CD4-positive, alpha-beta memory T cell (primary cell): ENCODE measurements at regions of chr3 and their contacts with region 1.

Region 1: GRCh38 chr3:128879125-128879969 is at the start of gene ACAD9:
- DNase-seq: peak; percentile 97
- H3K4me3 ChIP-seq: peak within 1 kb of the TSS; percentile 82 to 91
- H3K4me3 Mint-ChIP-seq: peak within 1 kb of the TSS; percentile 85 to 97 (median 94)
- H3K27ac ChIP-seq: peak within 1 kb of the TSS; percentile 92
- H3K27ac Mint-ChIP-seq: peak within 1 kb of the TSS; percentile 92 to 99 (median 99)
- H3K4me1 ChIP-seq: peaks cover 38% of the 10 kb centered on the region
- H3K4me1 Mint-ChIP-seq: peaks cover 47 to 79% (median 61%) of the 10 kb centered on the region in 4 donors
- H3K27me3 ChIP-seq: no peaks in the 10 kb centered on the region
- H3K27me3 Mint-ChIP-seq: no peaks in the 10 kb centered on the region
- total RNA-seq, gene ACAD9: 54.9 to 62.2 TPM

Region 2: DNA sequence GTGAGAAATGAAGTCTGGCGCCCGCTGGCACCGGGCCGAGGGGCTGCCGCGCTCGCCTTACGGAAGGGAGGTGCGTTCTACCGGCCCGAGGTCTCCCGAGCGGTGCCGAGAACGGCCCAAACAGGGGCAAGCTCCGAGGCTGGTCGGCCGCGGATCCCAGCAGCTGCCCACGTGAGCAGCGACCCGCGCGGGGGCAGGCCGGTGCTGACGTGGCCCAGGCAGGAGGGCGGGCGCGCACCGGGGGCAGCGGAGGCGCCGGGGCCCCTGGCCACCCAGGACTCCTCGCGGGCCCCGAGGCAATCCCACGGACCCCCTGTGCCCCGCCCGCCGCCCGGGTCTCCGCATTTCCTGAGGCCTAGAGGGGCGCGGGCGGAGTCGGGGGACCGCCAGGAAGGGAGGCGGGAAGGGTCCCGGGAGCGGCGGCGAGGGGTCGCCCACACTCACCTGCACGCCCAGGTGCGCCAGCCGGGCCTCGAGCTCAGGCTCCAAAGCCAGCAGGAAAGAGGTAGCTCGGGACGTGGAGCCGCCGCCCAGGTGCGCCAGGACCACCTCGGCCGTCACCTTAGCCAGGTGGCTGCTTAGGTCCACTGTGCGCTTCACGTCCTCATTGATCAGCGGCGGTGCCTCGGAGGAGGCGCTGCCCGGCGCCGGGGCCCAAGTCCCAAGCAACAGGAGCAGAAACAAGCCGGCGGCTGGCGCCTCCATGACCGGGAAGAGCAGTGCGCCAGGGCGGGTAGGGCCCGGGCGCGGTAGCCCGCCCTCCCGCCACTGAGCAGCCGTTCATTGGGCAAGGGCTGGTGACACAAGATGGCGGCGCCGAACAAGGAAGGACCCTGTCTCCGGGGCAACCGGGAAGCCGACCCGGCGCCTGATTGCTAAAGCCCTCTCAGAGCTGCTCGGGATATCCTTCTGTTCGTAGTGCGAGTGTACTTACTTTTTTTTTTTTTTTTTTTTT is 229.0 kb before region 1 on chr3 and contains the start of gene RPN1:
- CTCF ChIA-PET with region 1: interaction called, 4 read pairs
- POLR2A ChIA-PET with region 1: interaction called, 20 read pairs
- intact Hi-C with region 1: loop called (anchors 1 kb)
- DNase-seq: peak; percentile 96 to 99 (median 97)
- H3K4me3 ChIP-seq: peak within 1 kb of the TSS; percentile 84 to 89
- H3K4me3 Mint-ChIP-seq: peak within 1 kb of the TSS; percentile 85 to 94 (median 88)
- H3K27ac ChIP-seq: peak within 1 kb of the TSS; percentile 92
- H3K27ac Mint-ChIP-seq: peak within 1 kb of the TSS; percentile 88 to 96 (median 93)
- H3K4me1 ChIP-seq: peaks cover 26% of the 10 kb centered on the region
- H3K4me1 Mint-ChIP-seq: peaks cover 24 to 54% (median 34%) of the 10 kb centered on the region in 4 donors
- H3K27me3 ChIP-seq: no peaks in the 10 kb centered on the region
- H3K27me3 Mint-ChIP-seq: no peaks in the 10 kb centered on the region
- total RNA-seq, gene RPN1: 121 to 127 TPM

Region 3: DNA sequence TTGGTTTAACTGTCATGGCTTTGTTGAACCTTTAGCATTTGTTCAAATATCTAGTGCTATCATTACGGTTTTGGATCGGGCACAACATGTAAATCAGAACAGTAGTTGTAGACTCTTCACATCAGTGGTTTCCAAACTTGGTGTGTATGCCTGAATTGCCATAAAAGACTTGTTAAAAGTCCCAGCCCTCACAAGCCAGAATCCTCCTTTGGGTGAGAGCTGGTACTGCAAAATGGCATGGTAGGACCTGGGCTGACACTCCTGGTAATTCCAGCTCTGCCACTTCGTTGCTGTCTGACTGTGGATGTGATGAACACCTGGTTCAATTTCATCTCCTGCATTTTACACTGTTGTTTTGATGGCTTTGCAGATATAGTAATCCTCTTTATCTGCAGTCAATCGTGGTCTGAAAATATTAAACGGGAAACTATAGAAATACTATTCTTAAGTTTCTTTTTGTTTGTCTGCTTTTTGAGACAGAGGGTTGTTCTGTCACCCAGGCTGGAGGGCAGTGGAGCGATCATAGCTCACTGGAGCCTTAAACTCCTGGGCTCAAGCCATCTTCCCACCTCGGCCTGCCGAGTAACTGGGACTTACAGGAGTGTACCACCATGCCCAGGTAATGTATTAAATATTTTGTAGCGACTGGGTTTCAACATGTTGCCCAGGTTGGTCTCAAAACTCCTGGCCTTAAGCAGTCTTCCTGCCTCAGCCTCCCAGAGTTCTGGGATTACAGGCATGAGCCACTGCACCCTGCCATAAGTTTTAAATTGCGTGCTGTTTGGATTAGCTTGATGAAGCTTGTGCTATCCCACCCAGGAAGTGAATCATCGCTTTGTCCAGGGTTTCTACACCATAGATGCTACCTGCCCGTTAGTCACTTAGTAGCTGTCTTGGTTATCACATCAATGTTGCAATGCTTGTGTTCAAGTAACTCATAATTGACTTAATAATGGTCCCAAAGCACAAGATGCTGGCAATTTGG is 91.8 kb before region 1 on chr3:
- CTCF ChIA-PET with region 1: interaction called, 3 read pairs
- POLR2A ChIA-PET with region 1: interaction called, 16 read pairs
- intact Hi-C with region 1: no loop called
- DNase-seq: peak; percentile 39 to 77 (median 43)
- H3K4me3 ChIP-seq: peak overlapping the region; percentile 0 to 57
- H3K4me3 Mint-ChIP-seq: peak overlapping the region; percentile 53 to 90 (median 84)
- H3K27ac ChIP-seq: peak overlapping the region; percentile 48
- H3K27ac Mint-ChIP-seq: peak overlapping the region; percentile 89 to 98 (median 94)
- H3K4me1 ChIP-seq: peaks cover 79% of the 10 kb centered on the region
- H3K4me1 Mint-ChIP-seq: peaks cover 56 to 87% (median 72%) of the 10 kb centered on the region in 4 donors
- H3K27me3 ChIP-seq: no peaks in the 10 kb centered on the region
- H3K27me3 Mint-ChIP-seq: no peaks in the 10 kb centered on the region

Region 4: GRCh38 chr3:128804017-128804810 is 75.1 kb before region 1 on chr3:
- CTCF ChIA-PET with region 1: interaction called, 4 read pairs
- POLR2A ChIA-PET with region 1: interaction called, 5 read pairs
- intact Hi-C with region 1: loop called (anchors 2 kb)
- DNase-seq: peak; percentile 77 to 85 (median 81)
- H3K4me3 ChIP-seq: peak overlapping the region; percentile 26 to 45
- H3K4me3 Mint-ChIP-seq: peak overlapping the region; percentile 78 to 89 (median 84)
- H3K27ac ChIP-seq: peak overlapping the region; percentile 81
- H3K27ac Mint-ChIP-seq: peak overlapping the region; percentile 90 to 97 (median 95)
- H3K4me1 ChIP-seq: peaks cover 68% of the 10 kb centered on the region
- H3K4me1 Mint-ChIP-seq: peaks cover 54 to 78% (median 67%) of the 10 kb centered on the region in 4 donors
- H3K27me3 ChIP-seq: no peaks in the 10 kb centered on the region
- H3K27me3 Mint-ChIP-seq: no peaks in the 10 kb centered on the region

Region 5: DNA sequence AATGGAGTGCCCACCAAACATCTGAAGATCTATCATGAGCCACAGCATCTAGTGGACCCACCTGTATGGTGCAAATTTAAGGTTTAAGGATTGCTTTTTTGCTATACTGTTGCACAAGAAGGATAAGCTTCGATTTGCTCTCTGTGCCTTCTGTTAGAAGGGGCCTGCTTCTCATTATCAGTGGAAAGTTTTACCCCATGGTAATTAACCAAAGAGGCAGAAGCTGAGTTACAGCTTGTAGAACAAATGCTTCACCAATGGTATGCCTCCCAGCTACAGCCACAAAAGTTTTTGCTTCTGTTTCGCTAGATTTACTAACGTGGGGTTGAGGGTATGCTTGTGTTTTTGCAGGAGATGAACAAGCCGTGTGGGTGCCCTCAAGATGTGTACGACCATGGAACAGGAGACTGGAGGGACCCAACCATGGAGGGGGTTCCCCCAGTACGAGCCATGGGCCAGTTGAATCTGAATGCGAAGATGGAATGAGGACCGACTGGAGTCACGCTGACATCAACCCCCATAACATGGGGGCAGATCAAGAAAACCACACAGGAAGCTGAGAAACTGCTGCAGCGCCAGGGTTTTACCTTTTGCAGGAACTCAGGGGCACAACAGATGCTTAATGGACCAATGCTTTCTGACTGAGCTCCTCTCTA is 43.6 kb after region 1 on chr3:
- CTCF ChIA-PET with region 1: interaction called, 66 read pairs
- POLR2A ChIA-PET with region 1: interaction called, 21 read pairs
- intact Hi-C with region 1: loop called (anchors 1 kb)
- DNase-seq: peak; percentile 55 to 64 (median 57)
- H3K4me3 ChIP-seq: peak overlapping the region; percentile 29 to 74
- H3K4me3 Mint-ChIP-seq: peak overlapping the region; percentile 82 to 90 (median 85)
- H3K27ac ChIP-seq: no peak overlapping the region
- H3K27ac Mint-ChIP-seq: peak overlapping the region; percentile 70 to 91 (median 88)
- H3K4me1 ChIP-seq: peaks cover 20% of the 10 kb centered on the region
- H3K4me1 Mint-ChIP-seq: peaks cover 26 to 45% (median 37%) of the 10 kb centered on the region in 4 donors
- H3K27me3 ChIP-seq: no peaks in the 10 kb centered on the region
- H3K27me3 Mint-ChIP-seq: no peaks in the 10 kb centered on the region

Region 6: DNA sequence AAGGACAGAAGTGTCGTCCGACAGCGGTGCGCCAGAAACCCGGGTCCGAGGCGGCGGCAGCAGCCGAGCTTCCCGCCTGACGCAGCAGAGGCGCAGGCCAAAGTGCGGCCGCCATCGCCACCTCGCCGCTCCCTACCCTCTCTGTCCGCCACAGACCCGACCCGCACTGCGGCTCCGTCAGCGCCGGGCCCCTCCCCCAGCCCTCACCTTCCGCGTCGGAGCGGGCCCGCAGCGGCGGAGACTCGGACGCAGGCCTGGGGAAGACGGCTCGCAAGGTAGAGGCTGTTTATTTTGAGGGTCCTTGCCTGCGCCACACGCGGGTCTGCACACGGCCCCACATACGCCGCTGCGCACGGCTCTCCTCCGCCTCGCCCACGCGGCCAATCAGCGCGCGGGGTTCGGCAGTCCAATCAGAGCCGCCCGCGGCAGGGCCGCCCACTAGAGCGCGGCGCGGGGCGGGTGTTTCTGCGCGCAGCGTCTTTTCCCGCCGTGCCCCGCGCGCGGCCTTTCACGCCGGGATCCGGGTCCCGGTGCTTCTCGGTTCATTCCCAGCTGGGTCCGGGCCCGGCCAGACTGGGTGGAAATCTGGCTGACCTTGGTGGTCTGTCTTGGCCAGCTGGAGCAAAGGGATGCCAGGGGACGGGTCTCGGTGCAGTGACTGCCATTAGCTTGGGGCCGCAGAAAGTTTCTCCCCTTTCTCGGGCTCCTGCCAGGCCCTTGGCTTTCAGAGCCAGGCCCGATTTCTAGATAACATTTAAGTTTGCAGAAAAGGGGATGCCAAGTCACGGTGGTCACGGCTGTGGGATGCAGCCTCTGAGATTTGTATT is 304.4 kb after region 1 on chr3 and contains the start of gene CNBP:
- CTCF ChIA-PET with region 1: no interaction called
- POLR2A ChIA-PET with region 1: interaction called, 3 read pairs
- intact Hi-C with region 1: loop called (anchors 5 kb)
- DNase-seq: peak; percentile 90 to 95 (median 93)
- H3K4me3 ChIP-seq: peak within 1 kb of the TSS; percentile 51 to 93
- H3K4me3 Mint-ChIP-seq: peak within 1 kb of the TSS; percentile 89 to 99 (median 97)
- H3K27ac ChIP-seq: peak within 1 kb of the TSS; percentile 99
- H3K27ac Mint-ChIP-seq: peak within 1 kb of the TSS; percentile 91 to 99 (median 98)
- H3K4me1 ChIP-seq: peaks cover 41% of the 10 kb centered on the region
- H3K4me1 Mint-ChIP-seq: peaks cover 20 to 55% (median 31%) of the 10 kb centered on the region in 4 donors
- H3K27me3 ChIP-seq: no peaks in the 10 kb centered on the region
- H3K27me3 Mint-ChIP-seq: no peaks in the 10 kb centered on the region
- total RNA-seq, gene CNBP: 369 to 400 TPM